ENCODE measurements at regions of chr7 and their contacts with region 1.

Region 1: GRCh38 chr7:55964261-55965099 is at the start of gene NIPSNAP2:
- DNase-seq: peak; percentile 93
- total RNA-seq, gene NIPSNAP2: 251 TPM

Region 2: DNA sequence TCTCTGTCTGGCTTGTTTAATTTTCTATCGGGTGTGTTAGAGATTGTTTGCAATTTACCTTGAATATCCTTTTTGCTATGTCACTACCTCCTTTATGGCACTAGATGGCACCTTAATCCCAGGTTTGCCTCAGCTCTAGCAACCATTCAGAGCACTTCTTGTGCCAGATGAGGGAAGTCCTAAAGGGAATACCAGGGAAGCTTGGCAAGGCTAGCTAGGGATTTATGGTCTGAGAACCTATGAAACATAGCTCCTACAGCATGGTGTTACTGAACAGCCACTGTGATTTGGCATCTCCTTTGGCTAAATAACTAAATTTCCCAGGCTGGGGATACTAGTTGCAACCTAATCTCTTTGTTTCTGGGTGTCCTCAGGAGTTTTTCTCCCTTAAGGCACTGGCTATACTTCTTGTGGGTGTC is 323.2 kb before region 1 on chr7:
- intact Hi-C with region 1: loop called (anchors 5 kb)
- DNase-seq: no peak

Region 3: GRCh38 chr7:55657654-55658053 is 306.8 kb before region 1 on chr7:
- intact Hi-C with region 1: no loop called
- DNase-seq: no peak

Region 4: GRCh38 chr7:55877308-55877707 is 87.2 kb before region 1 on chr7:
- intact Hi-C with region 1: no loop called
- DNase-seq: no peak

Region 5: GRCh38 chr7:55887821-55888247 is 76.6 kb before region 1 on chr7:
- intact Hi-C with region 1: loop called (anchors 5 kb)
- DNase-seq: no peak

Region 6: GRCh38 chr7:55898287-55898686 is 66.2 kb before region 1 on chr7:
- intact Hi-C with region 1: no loop called
- DNase-seq: no peak

Region 7: GRCh38 chr7:55912748-55913158 is 51.7 kb before region 1 on chr7:
- intact Hi-C with region 1: no loop called
- DNase-seq: no peak

Region 8: DNA sequence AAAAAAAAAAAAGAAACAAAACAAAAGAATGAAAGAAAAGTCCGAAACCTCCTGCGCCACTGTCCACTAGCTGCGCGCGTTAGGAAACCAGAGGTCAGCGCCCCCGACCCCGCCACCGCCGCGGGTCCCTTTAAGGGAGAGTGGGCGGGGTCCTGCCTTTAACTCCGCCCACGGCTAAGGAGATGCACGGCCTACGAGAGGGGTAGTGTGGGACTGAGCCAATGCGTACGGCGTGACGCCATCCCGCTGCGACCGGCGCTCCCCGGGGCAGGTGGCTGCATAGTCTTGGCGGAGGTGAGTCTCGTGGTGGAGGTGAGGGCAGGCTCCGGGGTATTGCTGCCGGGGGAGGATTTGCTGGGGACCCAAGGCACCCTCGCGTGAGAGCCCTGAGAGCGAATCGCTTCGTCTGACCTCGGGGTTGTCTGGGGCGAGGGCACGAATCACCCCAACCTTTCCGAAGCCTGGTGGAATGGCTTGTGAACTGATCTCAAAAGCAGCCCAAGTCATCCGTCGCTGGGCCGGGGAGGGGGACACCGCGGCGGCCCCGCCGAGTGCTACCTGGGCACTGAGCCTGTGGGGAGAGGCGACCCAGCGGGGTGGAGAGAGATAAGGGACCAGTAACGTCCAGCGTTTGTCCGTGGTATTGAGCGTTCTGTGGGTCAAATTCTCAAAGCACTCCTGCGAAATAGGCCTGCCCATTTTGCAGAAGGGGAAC is 12.7 kb before region 1 on chr7 and contains the start of gene MRPS17:
- intact Hi-C with region 1: loop called (anchors 1 kb)
- DNase-seq: peak; percentile 96
- total RNA-seq, gene MRPS17: 13.4 TPM

Region 9: DNA sequence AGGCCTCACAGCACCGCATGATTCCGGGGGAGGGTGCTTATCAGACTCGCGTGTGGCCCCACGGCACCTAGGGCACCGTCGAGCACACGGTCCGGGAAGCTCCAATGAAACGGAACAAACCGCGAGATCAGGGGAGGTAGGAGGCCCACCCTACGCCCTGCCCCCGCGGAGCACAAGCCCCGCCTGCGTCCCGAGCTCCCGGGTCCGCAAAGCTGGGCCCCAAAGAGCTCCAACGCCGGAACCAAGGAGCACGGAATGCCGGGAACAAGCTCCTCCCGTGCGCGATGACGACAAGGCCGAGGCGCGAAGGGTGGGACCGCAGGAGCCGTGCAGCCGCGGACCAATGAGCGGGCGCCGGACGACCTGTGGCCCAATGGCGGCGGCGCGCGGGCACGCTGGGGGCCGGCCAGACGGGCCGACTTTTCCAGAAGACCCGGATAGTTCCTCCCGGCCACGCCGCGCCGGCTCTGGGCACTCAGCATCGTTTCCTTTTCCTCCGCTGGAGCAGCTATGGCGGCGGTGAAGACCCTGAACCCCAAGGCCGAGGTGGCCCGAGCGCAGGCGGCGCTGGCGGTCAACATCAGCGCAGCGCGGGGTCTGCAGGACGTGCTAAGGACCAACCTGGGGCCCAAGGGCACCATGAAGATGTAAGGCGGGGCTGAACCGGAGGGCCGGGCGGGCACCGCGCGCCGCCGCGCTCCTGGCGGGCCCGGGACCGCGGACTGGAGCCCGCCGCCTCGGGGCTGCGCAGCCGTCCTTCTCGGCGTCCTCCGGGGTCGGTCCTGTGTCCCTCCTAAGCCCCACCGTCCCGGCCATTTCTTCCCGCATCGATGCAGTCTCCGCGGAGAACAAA is 87.1 kb after region 1 on chr7 and contains the starts of genes CCT6A and PSPH:
- intact Hi-C with region 1: loop called (anchors 2 kb)
- DNase-seq: peak; percentile 99
- total RNA-seq, gene CCT6A: 74.0 TPM
- total RNA-seq, gene PSPH: 9.7 TPM